ENCODE measurements at regions of chr17 and their contacts with region 1.

Region 1: GRCh38 chr17:55295411-55296170 is 30.8 kb downstream of the HLF start:
- DNase-seq: peak; percentile 72
- H3K4me3 Mint-ChIP-seq: no peak overlapping the region
- H3K27ac Mint-ChIP-seq: no peak overlapping the region
- H3K4me1 Mint-ChIP-seq: no peaks in the 10 kb centered on the region
- H3K27me3 Mint-ChIP-seq: peaks cover 6% of the 10 kb centered on the region

Region 2: DNA sequence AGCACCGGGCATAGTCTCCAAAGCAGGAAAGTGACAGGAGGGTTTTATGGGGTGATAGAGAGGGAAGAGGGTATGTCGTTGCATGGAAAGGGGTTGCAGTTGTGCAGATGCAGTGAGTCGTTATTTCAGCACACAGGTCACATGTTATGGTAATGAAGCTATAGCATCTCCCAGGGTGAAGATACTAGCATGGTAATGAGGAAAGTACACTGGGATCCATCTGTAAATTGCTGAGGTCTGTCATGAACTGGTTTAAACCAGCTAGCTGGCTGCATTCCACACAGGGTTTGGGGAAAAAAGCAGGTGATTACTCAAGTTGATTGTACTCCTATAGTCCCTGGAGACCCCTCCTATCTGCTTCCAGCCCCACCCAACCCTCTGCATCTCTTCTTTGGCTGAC is 338.8 kb before region 1 on chr17:
- CTCF ChIA-PET with region 1: no interaction called
- intact Hi-C with region 1: no loop called
- DNase-seq: no peak
- H3K4me3 Mint-ChIP-seq: no peak overlapping the region
- H3K27ac Mint-ChIP-seq: no peak overlapping the region
- H3K4me1 Mint-ChIP-seq: no peaks in the 10 kb centered on the region
- H3K27me3 Mint-ChIP-seq: no peaks in the 10 kb centered on the region

Region 3: DNA sequence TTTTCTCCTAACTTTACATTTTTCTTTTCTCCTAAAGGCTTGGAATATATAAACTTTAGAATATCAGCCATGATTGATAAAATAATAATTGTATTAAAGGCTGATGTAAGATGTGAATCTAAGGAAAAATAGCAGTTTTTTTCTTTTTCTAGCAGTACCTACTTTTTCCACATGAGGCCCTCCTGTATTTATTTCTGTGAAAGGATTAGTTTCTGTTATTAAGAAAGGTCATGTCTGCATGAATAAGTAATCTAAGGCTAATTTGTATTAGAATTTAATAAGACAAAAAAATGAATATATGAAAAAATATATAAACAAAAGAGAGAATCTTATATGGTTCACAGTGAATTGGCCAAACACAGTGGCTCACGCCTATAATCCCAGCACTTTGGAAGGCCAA is 241.7 kb before region 1 on chr17:
- CTCF ChIA-PET with region 1: interaction called, 4 read pairs
- intact Hi-C with region 1: loop called (anchors 2 kb)
- DNase-seq: no peak
- H3K4me3 Mint-ChIP-seq: no peak overlapping the region
- H3K27ac Mint-ChIP-seq: no peak overlapping the region
- H3K4me1 Mint-ChIP-seq: no peaks in the 10 kb centered on the region
- H3K27me3 Mint-ChIP-seq: no peaks in the 10 kb centered on the region

Region 4: GRCh38 chr17:55275894-55276804 is 19.4 kb before region 1 on chr17:
- CTCF ChIA-PET with region 1: no interaction called
- intact Hi-C with region 1: no loop called
- DNase-seq: no peak
- H3K4me3 Mint-ChIP-seq: no peak overlapping the region
- H3K27ac Mint-ChIP-seq: no peak overlapping the region
- H3K4me1 Mint-ChIP-seq: no peaks in the 10 kb centered on the region
- H3K27me3 Mint-ChIP-seq: peaks cover 23% of the 10 kb centered on the region

Region 5: GRCh38 chr17:55318081-55318480 is 22.5 kb after region 1 on chr17:
- CTCF ChIA-PET with region 1: no interaction called
- intact Hi-C with region 1: no loop called
- DNase-seq: no peak
- H3K4me3 Mint-ChIP-seq: no peak overlapping the region
- H3K27ac Mint-ChIP-seq: no peak overlapping the region
- H3K4me1 Mint-ChIP-seq: peaks cover 6% of the 10 kb centered on the region
- H3K27me3 Mint-ChIP-seq: peaks cover 2% of the 10 kb centered on the region

Region 6: DNA sequence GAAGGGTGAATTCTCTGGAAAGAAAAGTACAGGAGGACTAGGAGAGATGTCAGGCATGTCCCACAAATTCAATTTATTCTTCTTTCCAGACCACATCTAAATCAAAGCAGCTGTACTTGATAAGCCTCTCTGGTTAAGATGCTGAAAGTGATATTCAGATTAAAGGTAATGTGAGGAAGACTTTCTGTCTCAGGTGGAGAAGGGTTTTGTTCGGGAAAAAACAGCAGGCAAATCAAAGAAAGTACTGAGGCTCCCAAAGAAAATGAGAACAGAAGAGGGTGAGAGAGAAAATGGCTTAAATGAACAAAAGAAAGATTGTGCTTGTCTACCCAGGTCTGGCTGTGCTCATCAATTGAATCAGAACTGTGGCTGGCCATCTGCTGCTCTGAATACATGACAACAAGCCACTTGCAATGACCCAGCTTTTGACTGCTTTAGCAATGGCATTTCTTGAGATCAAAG is 70.5 kb after region 1 on chr17:
- CTCF ChIA-PET with region 1: no interaction called
- intact Hi-C with region 1: no loop called
- DNase-seq: no peak
- H3K4me3 Mint-ChIP-seq: no peak overlapping the region
- H3K27ac Mint-ChIP-seq: no peak overlapping the region
- H3K4me1 Mint-ChIP-seq: peaks cover 2% of the 10 kb centered on the region
- H3K27me3 Mint-ChIP-seq: peaks cover 4% of the 10 kb centered on the region